Upper lobe of right lung (tissue), 1 donor: ENCODE measurements at regions of chr16 and their contacts with region 1.

Region 1: DNA sequence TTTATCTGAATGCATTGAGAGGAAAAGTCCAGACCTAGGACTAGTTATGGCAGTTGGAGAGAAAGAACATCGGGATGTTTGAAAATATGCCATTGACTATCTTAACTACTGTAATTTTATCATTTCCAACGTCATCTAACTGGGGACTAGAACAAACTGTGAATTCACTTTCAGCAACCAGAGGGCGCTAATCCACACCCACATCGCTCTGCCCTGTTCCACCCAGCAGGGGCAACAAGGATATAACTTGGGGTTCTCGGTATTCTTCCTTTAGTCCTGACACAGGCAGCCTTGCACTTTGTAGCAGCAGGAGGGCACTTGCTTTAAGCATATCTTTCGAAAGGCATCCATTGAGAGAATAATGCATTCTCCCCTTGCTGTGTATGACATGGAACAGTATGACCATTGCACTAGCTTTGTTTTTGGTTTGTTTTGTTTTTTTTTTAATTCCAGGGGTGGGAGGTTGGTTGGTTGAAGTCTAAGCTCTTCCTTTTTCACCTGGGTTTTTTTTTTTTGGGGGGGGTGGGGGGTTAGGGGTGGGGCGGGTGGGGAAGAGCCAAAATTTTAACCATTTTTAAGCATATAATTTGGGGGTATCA is 31.5 kb downstream of the SIAH1 start:
- DNase-seq: no peak
- ATAC-seq: peak; percentile 97
- H3K4me3 ChIP-seq: no peak overlapping the region
- H3K27ac ChIP-seq: no peak overlapping the region
- H3K4me1 ChIP-seq: no peaks in the 10 kb centered on the region
- H3K27me3 ChIP-seq: no peaks in the 10 kb centered on the region
- CTCF ChIP-seq: peak; percentile 89

Region 2: GRCh38 chr16:48194828-48195556 is 158.7 kb before region 1 on chr16:
- intact Hi-C with region 1: no loop called
- DNase-seq: no peak
- ATAC-seq: peak; percentile 30
- H3K4me3 ChIP-seq: no peak overlapping the region
- H3K27ac ChIP-seq: no peak overlapping the region
- H3K4me1 ChIP-seq: no peaks in the 10 kb centered on the region
- H3K27me3 ChIP-seq: no peaks in the 10 kb centered on the region
- CTCF ChIP-seq: no peak

Region 3: GRCh38 chr16:48542020-48542473 is 188.4 kb after region 1 on chr16:
- intact Hi-C with region 1: loop called (anchors 10 kb)
- DNase-seq: peak; percentile 81
- ATAC-seq: peak; percentile 81
- H3K4me3 ChIP-seq: no peak overlapping the region
- H3K27ac ChIP-seq: no peak overlapping the region
- H3K4me1 ChIP-seq: peaks cover 16% of the 10 kb centered on the region
- H3K27me3 ChIP-seq: no peaks in the 10 kb centered on the region
- CTCF ChIP-seq: peak; percentile 65

Region 4: GRCh38 chr16:48623304-48624016 is 269.8 kb after region 1 on chr16:
- intact Hi-C with region 1: loop called (anchors 10 kb)
- DNase-seq: peak; percentile 93
- ATAC-seq: peak; percentile 97
- H3K4me3 ChIP-seq: peak overlapping the region; percentile 41
- H3K27ac ChIP-seq: peak overlapping the region; percentile 68
- H3K4me1 ChIP-seq: peaks cover 27% of the 10 kb centered on the region
- H3K27me3 ChIP-seq: no peaks in the 10 kb centered on the region
- CTCF ChIP-seq: peak; percentile 98

Region 5: DNA sequence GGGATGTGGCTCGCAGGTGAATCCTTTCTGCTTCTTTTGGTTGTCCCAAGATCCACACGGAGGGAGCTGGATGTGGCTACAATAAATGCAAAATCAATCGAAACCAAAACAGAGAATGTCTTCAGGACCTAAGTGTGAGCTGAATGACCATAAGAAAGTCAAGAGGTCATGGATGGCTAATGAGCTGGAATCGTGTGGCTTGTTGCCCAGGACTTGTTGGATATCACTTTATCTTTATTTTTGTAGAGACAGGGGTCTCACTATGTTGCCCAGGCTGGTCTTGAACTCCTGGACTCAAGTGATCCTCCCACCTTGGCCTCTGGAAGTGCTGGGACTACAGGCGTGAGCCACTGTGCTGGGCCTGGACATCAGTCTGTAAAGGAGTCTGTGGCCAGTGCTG is 583.1 kb after region 1 on chr16:
- intact Hi-C with region 1: no loop called
- DNase-seq: no peak
- ATAC-seq: no peak
- H3K4me3 ChIP-seq: no peak overlapping the region
- H3K27ac ChIP-seq: no peak overlapping the region
- H3K4me1 ChIP-seq: no peaks in the 10 kb centered on the region
- H3K27me3 ChIP-seq: no peaks in the 10 kb centered on the region
- CTCF ChIP-seq: no peak